Upper lobe of right lung (tissue), 1 donor: ENCODE measurements at regions of chr6 and their contacts with region 1.

Region 1: GRCh38 chr6:52399511-52400312 is 20.4 kb upstream of the EFHC1 start:
- DNase-seq: no peak
- ATAC-seq: peak; percentile 88
- H3K4me3 ChIP-seq: no peak overlapping the region
- H3K27ac ChIP-seq: no peak overlapping the region
- H3K4me1 ChIP-seq: no peaks in the 10 kb centered on the region
- H3K27me3 ChIP-seq: no peaks in the 10 kb centered on the region
- CTCF ChIP-seq: peak; percentile 84

Region 2: GRCh38 chr6:52304983-52305390 is 94.7 kb before region 1 on chr6:
- intact Hi-C with region 1: loop called (anchors 10 kb)
- DNase-seq: no peak
- ATAC-seq: peak; percentile 66
- H3K4me3 ChIP-seq: peak overlapping the region; percentile 14
- H3K27ac ChIP-seq: peak overlapping the region; percentile 77
- H3K4me1 ChIP-seq: peaks cover 39% of the 10 kb centered on the region
- H3K27me3 ChIP-seq: no peaks in the 10 kb centered on the region
- CTCF ChIP-seq: no peak

Region 3: GRCh38 chr6:52317841-52318581 is 81.7 kb before region 1 on chr6:
- intact Hi-C with region 1: no loop called
- DNase-seq: no peak
- ATAC-seq: peak; percentile 60
- H3K4me3 ChIP-seq: no peak overlapping the region
- H3K27ac ChIP-seq: no peak overlapping the region
- H3K4me1 ChIP-seq: peaks cover 6% of the 10 kb centered on the region
- H3K27me3 ChIP-seq: no peaks in the 10 kb centered on the region
- CTCF ChIP-seq: no peak

Region 4: DNA sequence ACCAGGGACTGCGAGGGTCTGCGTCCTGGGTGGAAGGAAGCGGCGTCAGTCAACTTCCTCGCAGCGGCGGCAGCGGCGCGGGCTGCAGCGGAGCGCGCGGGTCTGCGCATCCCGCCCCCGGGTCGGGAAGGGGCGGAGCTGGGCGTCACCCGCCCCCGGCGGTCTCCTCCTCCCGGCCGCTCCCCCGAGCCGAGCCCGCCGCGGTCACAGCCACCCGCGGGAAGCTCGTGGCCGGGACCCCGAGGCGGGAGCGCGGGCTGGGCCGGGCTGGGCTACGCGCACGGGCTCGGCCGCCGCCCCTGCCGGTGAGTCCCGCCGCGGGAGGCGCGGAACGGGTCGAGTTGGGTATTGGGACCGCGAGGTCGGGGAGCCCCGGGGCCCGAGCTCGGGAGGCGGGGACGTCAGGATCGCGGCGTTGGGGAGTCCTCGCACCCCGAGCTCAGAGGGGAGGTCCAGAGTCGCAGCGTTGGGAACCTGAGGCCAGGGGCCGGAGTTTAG is 37.7 kb before region 1 on chr6 and contains the start of gene PAQR8:
- intact Hi-C with region 1: no loop called
- DNase-seq: peak; percentile 88
- ATAC-seq: peak; percentile 97
- H3K4me3 ChIP-seq: peak within 1 kb of the TSS; percentile 82
- H3K27ac ChIP-seq: peak within 1 kb of the TSS; percentile 78
- H3K4me1 ChIP-seq: peaks cover 16% of the 10 kb centered on the region
- H3K27me3 ChIP-seq: no peaks in the 10 kb centered on the region
- CTCF ChIP-seq: no peak
- total RNA-seq, gene PAQR8: 5.8 TPM